IMR-90 (cell line): ENCODE measurements at regions of chr3 and their contacts with region 1.

Region 1: DNA sequence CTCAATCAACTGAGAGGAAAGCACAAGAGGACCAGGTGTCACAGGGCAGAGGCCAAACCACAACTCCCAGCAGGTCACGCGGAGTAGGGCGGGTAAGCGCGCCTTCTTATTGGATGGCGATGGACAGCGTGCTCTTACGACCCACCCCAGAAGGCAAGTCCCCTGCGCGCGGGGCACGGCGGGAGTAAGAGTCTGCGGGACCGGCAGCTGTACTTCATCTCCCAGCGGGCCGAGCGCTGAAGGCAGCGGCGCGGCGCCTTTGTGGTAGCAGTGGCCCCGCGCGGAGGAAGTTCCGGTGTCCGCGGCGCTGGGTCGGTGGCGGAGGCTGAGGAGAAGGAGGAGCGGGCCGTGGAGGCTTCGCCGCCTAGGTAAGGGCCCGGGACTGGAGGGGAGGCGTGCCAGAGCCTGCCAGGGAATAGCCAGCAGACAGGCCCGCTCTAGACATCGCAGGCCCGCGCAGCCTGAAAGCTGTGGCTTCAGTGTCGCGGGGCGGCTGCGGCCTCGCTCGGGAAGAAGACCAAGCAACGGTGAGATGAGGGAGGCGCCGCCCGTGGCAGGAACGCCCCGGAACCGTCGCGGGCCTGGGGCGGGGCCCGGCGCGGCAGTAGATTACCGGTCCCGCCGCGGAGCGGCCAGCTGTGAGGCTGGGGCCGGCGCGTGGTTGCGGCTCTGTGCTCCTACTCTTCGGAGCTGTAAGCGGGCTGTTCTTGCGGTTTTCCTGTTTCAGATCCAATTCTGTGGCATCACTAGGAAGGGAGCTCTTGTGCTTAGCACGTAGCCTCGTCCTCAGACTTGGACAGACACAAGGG is at the start of gene RBM6:
- DNase-seq: peak; percentile 97
- ATAC-seq: peak; percentile 98
- H3K4me3 ChIP-seq: peak within 1 kb of the TSS; percentile 80
- H3K27ac ChIP-seq: peak within 1 kb of the TSS; percentile 93
- H3K4me1 ChIP-seq: peaks cover 4% of the 10 kb centered on the region; the same call in 1 of the 2 replicates
- H3K27me3 ChIP-seq: no peaks in the 10 kb centered on the region
- CTCF ChIP-seq: no peak
- POLR2A ChIP-seq: peak; percentile 92
- RAD21 ChIP-seq: no peak
- total RNA-seq, gene RBM6: 38.5 and 40.8 TPM in 2 replicates

Region 2: GRCh38 chr3:49411968-49412631 is 528.0 kb before region 1 on chr3 and contains the starts of genes RHOA and TCTA:
- CTCF ChIA-PET with region 1: no interaction called
- POLR2A ChIA-PET with region 1: no interaction called
- dilution Hi-C with region 1: no loop called
- in situ Hi-C with region 1: no loop called
- intact Hi-C with region 1: no loop called
- DNase-seq: peak; percentile 100
- ATAC-seq: peak; percentile 91
- H3K4me3 ChIP-seq: peak within 1 kb of the TSS; percentile 78
- H3K27ac ChIP-seq: peak within 1 kb of the TSS; percentile 96
- H3K4me1 ChIP-seq: peaks cover 9% of the 10 kb centered on the region
- H3K27me3 ChIP-seq: no peaks in the 10 kb centered on the region
- CTCF ChIP-seq: no peak
- POLR2A ChIP-seq: peak; percentile 97
- RAD21 ChIP-seq: no peak
- total RNA-seq, gene RHOA: 879 and 897 TPM in 2 replicates
- total RNA-seq, gene TCTA: 12.8 and 15.1 TPM in 2 replicates

Region 3: GRCh38 chr3:49703443-49703927 is 236.6 kb before region 1 on chr3:
- CTCF ChIA-PET with region 1: no interaction called
- POLR2A ChIA-PET with region 1: no interaction called
- dilution Hi-C with region 1: no loop called
- in situ Hi-C with region 1: no loop called
- intact Hi-C with region 1: no loop called
- DNase-seq: peak; percentile 62
- ATAC-seq: peak; percentile 96
- H3K4me3 ChIP-seq: no peak overlapping the region
- H3K27ac ChIP-seq: no peak overlapping the region
- H3K4me1 ChIP-seq: no peaks in the 10 kb centered on the region
- H3K27me3 ChIP-seq: no peaks in the 10 kb centered on the region
- CTCF ChIP-seq: peak; percentile 88
- POLR2A ChIP-seq: no peak
- RAD21 ChIP-seq: peak; percentile 87

Region 4: GRCh38 chr3:50088725-50089608 is 148.9 kb after region 1 on chr3 and contains the start of gene RBM5:
- CTCF ChIA-PET with region 1: no interaction called
- POLR2A ChIA-PET with region 1: interaction called, 4 read pairs
- dilution Hi-C with region 1: no loop called
- in situ Hi-C with region 1: no loop called
- intact Hi-C with region 1: loop called (anchors 5 kb)
- DNase-seq: peak; percentile 91
- ATAC-seq: peak; percentile 96
- H3K4me3 ChIP-seq: peak within 1 kb of the TSS; percentile 94
- H3K27ac ChIP-seq: peak within 1 kb of the TSS; percentile 95
- H3K4me1 ChIP-seq: peaks cover 7% of the 10 kb centered on the region; the same call in 1 of the 2 replicates
- H3K27me3 ChIP-seq: no peaks in the 10 kb centered on the region
- CTCF ChIP-seq: no peak
- POLR2A ChIP-seq: peak; percentile 83
- RAD21 ChIP-seq: no peak
- total RNA-seq, gene RBM5: 121 and 122 TPM in 2 replicates